Calu3 (cell line): ENCODE measurements at regions of chr6 and their contacts with region 1.

Region 1: GRCh38 chr6:138832182-138832581 is 36.3 kb downstream of the ECT2L start:
- DNase-seq: no peak
- H3K4me3 Mint-ChIP-seq: no peak overlapping the region
- H3K27ac Mint-ChIP-seq: no peak overlapping the region
- H3K4me1 Mint-ChIP-seq: no peaks in the 10 kb centered on the region
- H3K27me3 Mint-ChIP-seq: no peaks in the 10 kb centered on the region
- CTCF ChIP-seq: no peak

Region 2: GRCh38 chr6:138869398-138869797 is 37.2 kb after region 1 on chr6:
- CTCF ChIA-PET with region 1: no interaction called
- intact Hi-C with region 1: loop called (anchors 1 kb)
- DNase-seq: no peak
- H3K4me3 Mint-ChIP-seq: no peak overlapping the region
- H3K27ac Mint-ChIP-seq: no peak overlapping the region
- H3K4me1 Mint-ChIP-seq: no peaks in the 10 kb centered on the region
- H3K27me3 Mint-ChIP-seq: no peaks in the 10 kb centered on the region
- CTCF ChIP-seq: no peak

Region 3: GRCh38 chr6:139240161-139241010 is 408.2 kb after region 1 on chr6:
- CTCF ChIA-PET with region 1: no interaction called
- intact Hi-C with region 1: no loop called
- DNase-seq: no peak
- H3K4me3 Mint-ChIP-seq: no peak overlapping the region
- H3K27ac Mint-ChIP-seq: no peak overlapping the region
- H3K4me1 Mint-ChIP-seq: no peaks in the 10 kb centered on the region
- H3K27me3 Mint-ChIP-seq: no peaks in the 10 kb centered on the region
- CTCF ChIP-seq: no peak